Activated naive CD4-positive, alpha-beta T cell treated with anti-CD3 and anti-CD28 coated beads for 36 hours (primary cell): ENCODE measurements at regions of chr4 and their contacts with region 1.

Region 1: DNA sequence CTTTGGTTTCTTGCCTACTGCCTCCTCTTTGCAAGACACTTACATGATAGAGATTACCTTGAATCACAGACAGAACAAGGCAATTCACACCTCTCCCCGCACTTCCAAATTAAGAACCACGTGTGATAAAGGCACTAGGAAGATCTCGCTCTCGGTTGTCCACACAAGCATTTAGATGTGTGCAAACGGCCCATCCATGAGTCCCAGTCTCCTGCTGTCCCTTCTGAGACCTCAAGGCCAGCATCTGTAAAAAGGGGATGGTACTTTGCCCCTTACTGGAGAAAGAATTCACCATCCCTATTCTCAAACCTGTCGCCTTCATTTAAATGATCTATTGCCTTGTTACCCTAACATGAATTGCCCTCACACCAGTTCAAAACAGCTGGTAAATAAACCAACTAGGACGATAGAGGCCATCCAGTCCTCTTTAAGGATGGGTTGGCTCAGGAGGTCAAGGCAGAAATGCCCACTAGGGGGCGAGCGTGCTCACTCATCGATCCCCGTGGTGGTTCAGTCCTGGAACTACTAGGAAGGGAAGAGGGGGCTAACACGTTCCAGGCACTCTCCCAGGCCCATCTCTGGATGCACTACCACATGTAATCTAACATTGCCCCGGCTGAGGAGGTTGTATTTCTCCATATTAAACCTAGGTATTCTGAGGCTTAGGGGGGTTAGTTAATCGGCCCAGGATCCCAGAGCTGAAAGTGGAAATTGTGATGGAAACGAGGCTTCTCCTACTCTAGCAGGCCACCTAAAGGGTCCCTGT is 95.8 kb downstream of the DHX15 start:
- DNase-seq: peak; percentile 82
- H3K4me3 Mint-ChIP-seq: no peak overlapping the region
- H3K27ac Mint-ChIP-seq: no peak overlapping the region
- H3K4me1 Mint-ChIP-seq: no peaks in the 10 kb centered on the region
- H3K27me3 Mint-ChIP-seq: peaks cover 10% of the 10 kb centered on the region

Region 2: DNA sequence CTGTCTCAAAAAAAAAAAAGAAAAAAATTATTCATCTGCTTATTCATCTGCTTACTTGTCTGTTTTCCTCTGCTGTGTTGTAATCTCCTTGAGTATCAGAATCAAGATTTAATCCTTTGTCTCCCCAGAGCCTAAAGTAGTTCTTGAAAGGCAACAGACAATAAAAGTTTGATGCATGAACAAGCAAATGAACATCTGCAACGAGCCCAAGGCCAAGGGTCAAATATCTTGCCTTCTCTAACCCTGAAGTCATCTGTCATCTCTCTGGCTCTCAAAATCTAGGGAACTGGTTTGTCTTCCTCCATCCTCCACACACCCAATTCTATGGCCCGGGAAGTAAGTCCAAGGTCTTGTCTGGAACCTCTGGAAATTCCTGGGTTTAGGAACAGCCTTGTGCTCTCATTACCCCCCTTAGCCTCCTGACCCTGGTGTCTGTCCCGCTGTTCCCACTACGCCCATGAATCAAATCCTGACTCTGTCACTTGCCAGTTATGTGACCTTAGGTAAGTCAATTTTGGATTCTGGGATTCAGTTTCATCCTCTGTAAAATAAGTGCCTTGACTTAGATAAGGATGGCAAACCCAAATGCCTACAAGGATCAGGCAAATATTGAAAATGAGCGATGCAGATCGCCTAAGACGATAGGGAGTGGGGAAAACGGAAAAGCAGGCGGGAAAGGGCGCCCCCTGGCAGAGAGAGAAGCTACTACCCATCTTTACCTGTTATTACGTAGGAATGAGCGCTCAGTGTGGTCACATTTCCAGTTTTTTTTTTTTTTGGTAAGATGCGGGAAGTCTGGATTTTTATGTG is 198.5 kb after region 1 on chr4:
- CTCF ChIA-PET with region 1: interaction called, 13 read pairs
- intact Hi-C with region 1: loop called (anchors 1 kb)
- DNase-seq: peak; percentile 51
- H3K4me3 Mint-ChIP-seq: no peak overlapping the region
- H3K27ac Mint-ChIP-seq: no peak overlapping the region
- H3K4me1 Mint-ChIP-seq: no peaks in the 10 kb centered on the region
- H3K27me3 Mint-ChIP-seq: peaks cover 20% of the 10 kb centered on the region

Region 3: DNA sequence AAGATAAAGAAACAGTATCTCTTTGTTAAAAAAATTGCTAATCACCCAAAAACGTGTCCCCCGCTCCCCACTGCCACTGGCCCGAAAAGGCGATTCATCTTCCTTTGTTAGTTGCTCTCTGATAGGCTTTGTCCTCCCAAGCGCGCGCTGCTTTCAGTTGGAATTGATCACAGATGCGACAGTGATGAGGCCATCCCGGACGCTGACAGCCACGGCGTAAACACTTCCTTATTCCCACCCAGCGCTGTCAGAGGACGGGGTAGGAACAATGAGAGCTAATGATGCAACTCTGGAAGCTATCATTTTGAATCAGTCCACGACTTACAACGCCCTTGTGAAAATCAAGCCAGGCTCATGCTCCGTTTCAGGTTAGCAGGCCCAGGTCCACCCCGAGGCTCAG is 328.2 kb after region 1 on chr4:
- CTCF ChIA-PET with region 1: no interaction called
- intact Hi-C with region 1: no loop called
- DNase-seq: no peak
- H3K4me3 Mint-ChIP-seq: no peak overlapping the region
- H3K27ac Mint-ChIP-seq: no peak overlapping the region
- H3K4me1 Mint-ChIP-seq: no peaks in the 10 kb centered on the region
- H3K27me3 Mint-ChIP-seq: peaks cover 3% of the 10 kb centered on the region

Region 4: GRCh38 chr4:24980064-24980690 is 491.6 kb after region 1 on chr4:
- CTCF ChIA-PET with region 1: no interaction called
- intact Hi-C with region 1: loop called (anchors 1 kb)
- DNase-seq: peak; percentile 70
- H3K4me3 Mint-ChIP-seq: no peak overlapping the region
- H3K27ac Mint-ChIP-seq: no peak overlapping the region
- H3K4me1 Mint-ChIP-seq: peaks cover 11% of the 10 kb centered on the region
- H3K27me3 Mint-ChIP-seq: peaks cover 22% of the 10 kb centered on the region

Region 5: DNA sequence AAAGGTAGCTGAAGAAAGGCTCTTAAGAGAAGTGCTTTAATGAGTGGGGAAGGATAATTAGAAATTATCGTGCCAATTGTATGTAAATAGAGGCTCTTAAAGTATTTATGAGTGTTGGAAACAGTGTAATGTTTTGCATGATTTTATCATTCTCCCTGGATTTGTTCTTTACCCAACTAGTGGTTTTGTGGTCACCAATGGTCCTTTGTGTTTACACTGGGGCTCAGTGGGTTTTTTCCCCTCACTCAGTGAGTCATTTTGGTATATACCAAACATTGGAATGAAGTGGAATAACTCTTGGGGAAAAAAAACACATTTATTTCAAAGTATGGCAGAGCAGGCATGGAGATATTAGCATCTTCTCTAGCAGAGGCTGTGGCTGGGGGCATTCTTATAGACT is 563.0 kb after region 1 on chr4:
- CTCF ChIA-PET with region 1: no interaction called
- intact Hi-C with region 1: loop called (anchors 5 kb)
- DNase-seq: no peak
- H3K4me3 Mint-ChIP-seq: no peak overlapping the region
- H3K27ac Mint-ChIP-seq: no peak overlapping the region
- H3K4me1 Mint-ChIP-seq: no peaks in the 10 kb centered on the region
- H3K27me3 Mint-ChIP-seq: peaks cover 10% of the 10 kb centered on the region

Region 6: GRCh38 chr4:25144870-25145481 is 656.4 kb after region 1 on chr4:
- CTCF ChIA-PET with region 1: interaction called, 3 read pairs
- intact Hi-C with region 1: loop called (anchors 5 kb)
- DNase-seq: no peak
- H3K4me3 Mint-ChIP-seq: no peak overlapping the region
- H3K27ac Mint-ChIP-seq: no peak overlapping the region
- H3K4me1 Mint-ChIP-seq: no peaks in the 10 kb centered on the region
- H3K27me3 Mint-ChIP-seq: no peaks in the 10 kb centered on the region